ENCODE measurements at regions of chr10 and their contacts with region 1.

Region 1: GRCh38 chr10:117167789-117168674 is 29.3 kb upstream of the KCNK18 start:
- DNase-seq: peak; percentile 73
- H3K4me3 Mint-ChIP-seq: peak overlapping the region; percentile 65
- H3K27ac Mint-ChIP-seq: no peak overlapping the region
- H3K4me1 Mint-ChIP-seq: no peaks in the 10 kb centered on the region
- H3K27me3 Mint-ChIP-seq: peaks cover 45% of the 10 kb centered on the region
- CTCF ChIP-seq: peak; percentile 85

Region 2: GRCh38 chr10:116084161-116084560 is 1083.9 kb before region 1 on chr10:
- CTCF ChIA-PET with region 1: no interaction called
- intact Hi-C with region 1: no loop called
- DNase-seq: no peak
- H3K4me3 Mint-ChIP-seq: no peak overlapping the region
- H3K27ac Mint-ChIP-seq: no peak overlapping the region
- H3K4me1 Mint-ChIP-seq: no peaks in the 10 kb centered on the region
- H3K27me3 Mint-ChIP-seq: peaks cover 8% of the 10 kb centered on the region
- CTCF ChIP-seq: no peak

Region 3: DNA sequence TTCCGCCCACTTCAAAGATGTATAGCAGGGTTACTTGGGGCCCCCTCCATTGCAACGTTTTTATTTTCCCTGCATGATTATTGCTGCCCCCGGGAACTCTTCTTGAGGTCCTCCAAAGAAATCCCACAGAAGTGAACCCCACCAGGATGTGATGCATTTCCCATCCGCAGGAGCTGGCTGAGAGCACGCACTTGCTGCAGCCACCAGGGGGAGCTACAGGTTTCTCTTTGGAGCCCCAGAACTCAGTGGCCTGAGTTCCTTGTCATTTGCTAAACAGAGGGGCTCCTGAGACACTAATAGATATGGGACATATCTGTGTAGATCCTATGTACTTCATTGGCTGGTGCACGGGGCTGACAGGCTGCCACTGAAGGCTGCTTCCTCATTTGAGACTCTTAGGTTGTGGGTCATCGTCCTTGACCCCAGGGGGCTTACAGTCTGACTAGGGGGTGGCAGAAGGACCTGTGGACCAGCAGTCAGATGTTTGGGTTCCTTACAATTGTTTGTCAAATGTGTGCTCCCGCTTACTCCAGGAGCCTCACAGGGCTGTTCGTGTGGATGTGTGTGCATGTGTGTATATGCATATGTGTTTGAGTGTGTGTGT is 371.0 kb before region 1 on chr10:
- CTCF ChIA-PET with region 1: interaction called, 26 read pairs
- intact Hi-C with region 1: loop called (anchors 2 kb)
- DNase-seq: peak; percentile 79
- H3K4me3 Mint-ChIP-seq: no peak overlapping the region
- H3K27ac Mint-ChIP-seq: no peak overlapping the region
- H3K4me1 Mint-ChIP-seq: no peaks in the 10 kb centered on the region
- H3K27me3 Mint-ChIP-seq: peaks cover 43% of the 10 kb centered on the region
- CTCF ChIP-seq: peak; percentile 76

Region 4: DNA sequence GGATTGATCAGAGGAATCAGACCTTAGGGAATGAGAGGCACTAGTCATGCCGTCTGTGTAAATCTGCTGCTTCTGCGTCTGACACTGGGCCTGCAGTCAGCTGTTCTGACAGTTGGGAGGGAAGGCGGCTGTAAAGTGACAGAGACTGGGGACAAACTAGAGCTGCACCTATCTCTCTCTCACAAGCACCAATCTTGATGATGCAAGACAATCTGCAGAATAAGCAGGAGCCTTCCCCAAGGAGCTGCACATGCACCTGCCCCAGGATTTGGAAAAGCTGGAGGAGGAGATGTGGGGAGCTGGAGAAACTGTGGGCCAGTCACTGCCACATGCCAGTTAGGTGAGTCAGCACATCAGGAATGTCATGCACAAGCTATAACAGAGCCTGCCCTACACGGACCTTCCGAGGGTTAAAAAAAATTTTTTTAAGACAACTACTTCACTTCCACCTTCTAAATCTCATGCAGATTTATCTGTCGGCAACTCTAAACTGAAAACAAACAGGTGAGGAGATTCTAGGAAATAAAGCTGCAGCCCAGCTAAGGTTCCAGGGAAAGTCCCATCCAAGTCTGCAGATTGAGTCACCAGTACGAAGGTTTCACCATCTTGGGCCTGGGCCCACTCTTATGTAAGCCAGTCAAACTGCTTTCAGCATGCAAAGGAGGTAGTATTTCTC is 279.5 kb before region 1 on chr10:
- CTCF ChIA-PET with region 1: interaction called, 4 read pairs
- intact Hi-C with region 1: loop called (anchors 5 kb)
- DNase-seq: peak; percentile 57
- H3K4me3 Mint-ChIP-seq: peak overlapping the region; percentile 45
- H3K27ac Mint-ChIP-seq: peak overlapping the region; percentile 47
- H3K4me1 Mint-ChIP-seq: peaks cover 19% of the 10 kb centered on the region
- H3K27me3 Mint-ChIP-seq: no peaks in the 10 kb centered on the region
- CTCF ChIP-seq: no peak

Region 5: GRCh38 chr10:117005027-117005526 is 163.0 kb before region 1 on chr10 and contains the start of gene SHTN1:
- CTCF ChIA-PET with region 1: no interaction called
- intact Hi-C with region 1: loop called (anchors 2 kb)
- DNase-seq: peak; percentile 87
- H3K4me3 Mint-ChIP-seq: peak within 1 kb of the TSS; percentile 78
- H3K27ac Mint-ChIP-seq: peak within 1 kb of the TSS; percentile 76
- H3K4me1 Mint-ChIP-seq: no peaks in the 10 kb centered on the region
- H3K27me3 Mint-ChIP-seq: no peaks in the 10 kb centered on the region
- CTCF ChIP-seq: no peak
- total RNA-seq, gene SHTN1: 29.9 and 32.3 TPM in 2 replicates

Region 6: GRCh38 chr10:117053482-117053881 is 114.5 kb before region 1 on chr10:
- CTCF ChIA-PET with region 1: no interaction called
- intact Hi-C with region 1: no loop called
- DNase-seq: no peak
- H3K4me3 Mint-ChIP-seq: no peak overlapping the region
- H3K27ac Mint-ChIP-seq: no peak overlapping the region
- H3K4me1 Mint-ChIP-seq: no peaks in the 10 kb centered on the region
- H3K27me3 Mint-ChIP-seq: no peaks in the 10 kb centered on the region
- CTCF ChIP-seq: no peak

Region 7: GRCh38 chr10:117204316-117204715 is 36.3 kb after region 1 on chr10:
- CTCF ChIA-PET with region 1: no interaction called
- intact Hi-C with region 1: no loop called
- DNase-seq: no peak
- H3K4me3 Mint-ChIP-seq: no peak overlapping the region
- H3K27ac Mint-ChIP-seq: no peak overlapping the region
- H3K4me1 Mint-ChIP-seq: no peaks in the 10 kb centered on the region
- H3K27me3 Mint-ChIP-seq: peaks cover 48% of the 10 kb centered on the region
- CTCF ChIP-seq: no peak

Measured in Calu3 (cell line).